Ovary (tissue), 10 donors: ENCODE measurements at regions of chr19 and their contacts with region 1.

Region 1: GRCh38 chr19:21513651-21514050 is 8.2 kb downstream of the ZNF429 start:
- DNase-seq: no peak
- H3K4me3 ChIP-seq: no peak overlapping the region
- H3K27ac ChIP-seq: no peak overlapping the region
- H3K4me1 ChIP-seq: no peaks in the 10 kb centered on the region
- H3K27me3 ChIP-seq: no peaks in the 10 kb centered on the region
- CTCF ChIP-seq: no peak
- EP300 ChIP-seq: no peak
- POLR2A ChIP-seq: no peak

Region 2: DNA sequence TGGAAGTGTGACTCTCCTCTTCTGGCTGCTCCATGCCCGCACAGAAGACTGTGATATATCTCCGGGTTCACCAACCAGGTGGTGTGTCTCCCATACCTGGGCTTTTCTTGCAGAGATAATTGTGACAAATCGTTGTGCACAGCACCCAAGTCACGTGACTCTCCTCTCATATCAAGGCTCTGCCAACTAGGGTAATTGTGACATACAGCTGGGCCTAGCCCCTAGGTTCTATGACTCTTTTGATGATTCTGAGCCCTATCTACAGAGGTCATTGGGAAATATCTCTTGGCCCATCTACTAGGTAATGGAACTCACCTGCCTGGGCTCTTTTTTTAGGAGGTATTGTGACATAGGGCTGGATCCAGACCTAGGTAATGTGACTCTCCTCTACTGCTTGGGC is 81.5 kb after region 1 on chr19:
- intact Hi-C with region 1: loop called in 1 of 4 experiments (anchors 5 kb)
- DNase-seq: no peak
- H3K4me3 ChIP-seq: no peak overlapping the region
- H3K27ac ChIP-seq: no peak overlapping the region
- H3K4me1 ChIP-seq: no peaks in the 10 kb centered on the region
- H3K27me3 ChIP-seq: no peaks in the 10 kb centered on the region
- CTCF ChIP-seq: no peak
- EP300 ChIP-seq: no peak
- POLR2A ChIP-seq: no peak

Region 3: GRCh38 chr19:21608571-21608970 is 94.9 kb after region 1 on chr19:
- intact Hi-C with region 1: no loop called
- DNase-seq: no peak
- H3K4me3 ChIP-seq: no peak overlapping the region
- H3K27ac ChIP-seq: no peak overlapping the region
- H3K4me1 ChIP-seq: peaks cover 10% of the 10 kb centered on the region
- H3K27me3 ChIP-seq: no peaks in the 10 kb centered on the region
- CTCF ChIP-seq: no peak
- EP300 ChIP-seq: no peak
- POLR2A ChIP-seq: no peak

Region 4: GRCh38 chr19:21674454-21674853 is 160.8 kb after region 1 on chr19:
- intact Hi-C with region 1: no loop called
- DNase-seq: no peak
- H3K4me3 ChIP-seq: no peak overlapping the region
- H3K27ac ChIP-seq: no peak overlapping the region
- H3K4me1 ChIP-seq: no peaks in the 10 kb centered on the region
- H3K27me3 ChIP-seq: no peaks in the 10 kb centered on the region
- CTCF ChIP-seq: no peak
- EP300 ChIP-seq: no peak
- POLR2A ChIP-seq: no peak

Region 5: DNA sequence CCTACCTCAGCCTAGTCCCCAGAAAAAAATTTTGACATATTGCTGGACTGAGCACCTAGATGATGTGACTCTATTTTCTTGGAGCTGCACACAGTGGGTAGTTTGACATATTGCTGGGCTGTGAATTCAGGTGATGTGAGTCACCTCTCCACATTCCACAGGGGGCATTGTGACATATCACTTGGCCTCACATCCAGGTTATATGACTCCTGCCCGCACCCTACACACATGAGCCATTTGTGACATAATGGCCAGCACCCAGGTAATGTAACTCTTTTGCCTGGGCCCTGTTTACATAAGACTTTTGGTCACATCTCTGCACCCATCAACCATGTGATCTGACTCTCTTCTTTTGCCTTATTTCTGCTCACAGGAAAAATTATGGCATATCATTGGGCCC is 377.4 kb after region 1 on chr19:
- intact Hi-C with region 1: no loop called
- DNase-seq: no peak
- H3K4me3 ChIP-seq: no peak overlapping the region
- H3K27ac ChIP-seq: no peak overlapping the region
- H3K4me1 ChIP-seq: no peaks in the 10 kb centered on the region
- H3K27me3 ChIP-seq: no peaks in the 10 kb centered on the region
- CTCF ChIP-seq: no peak
- EP300 ChIP-seq: no peak
- POLR2A ChIP-seq: no peak